Activated T-helper 1 cell treated with anti-CD3 and anti-CD28 coated beads, Interleukin-12 subunit alpha, Interleukin-12 subunit beta, Interleukin-2, Interleukin-4 antibody, amounts not matched to agents 30 ng/mL and 10 ng/mL and 1 ng/mL, durations not matched to agents 14 hours and 24 hours and 36 hours (primary cell): ENCODE measurements at regions of chr4 and their contacts with region 1.

Region 1: GRCh38 chr4:139266583-139267257 is 13.3 kb downstream of the MGARP start:
- DNase-seq: peak; percentile 70
- H3K4me3 Mint-ChIP-seq: peak overlapping the region; percentile 50
- H3K27ac Mint-ChIP-seq: peak overlapping the region; percentile 10
- H3K4me1 Mint-ChIP-seq: peaks cover 21% of the 10 kb centered on the region
- H3K27me3 Mint-ChIP-seq: peaks cover 23% of the 10 kb centered on the region

Region 2: GRCh38 chr4:138242076-138242833 is 1024.5 kb before region 1 on chr4 and contains the start of gene SLC7A11:
- intact Hi-C with region 1: loop called (anchors 10 kb)
- DNase-seq: peak; percentile 70
- H3K4me3 Mint-ChIP-seq: peak within 1 kb of the TSS; percentile 88
- H3K27ac Mint-ChIP-seq: peak within 1 kb of the TSS; percentile 83
- H3K4me1 Mint-ChIP-seq: peaks cover 32% of the 10 kb centered on the region
- H3K27me3 Mint-ChIP-seq: peaks cover 4% of the 10 kb centered on the region
- total RNA-seq, gene SLC7A11: 2.6 and 2.7 TPM in 2 replicates

Region 3: GRCh38 chr4:139279760-139280620 is 13.3 kb after region 1 on chr4 and contains the start of gene MGARP:
- intact Hi-C with region 1: loop called (anchors 1 kb)
- DNase-seq: no peak
- H3K4me3 Mint-ChIP-seq: peak within 1 kb of the TSS; percentile 65
- H3K27ac Mint-ChIP-seq: no peak within 1 kb of the TSS
- H3K4me1 Mint-ChIP-seq: peaks cover 13% of the 10 kb centered on the region
- H3K27me3 Mint-ChIP-seq: peaks cover 73% of the 10 kb centered on the region
- total RNA-seq, gene MGARP: 0.15 TPM in 1 of 2 replicates, not detected in the other

Region 4: DNA sequence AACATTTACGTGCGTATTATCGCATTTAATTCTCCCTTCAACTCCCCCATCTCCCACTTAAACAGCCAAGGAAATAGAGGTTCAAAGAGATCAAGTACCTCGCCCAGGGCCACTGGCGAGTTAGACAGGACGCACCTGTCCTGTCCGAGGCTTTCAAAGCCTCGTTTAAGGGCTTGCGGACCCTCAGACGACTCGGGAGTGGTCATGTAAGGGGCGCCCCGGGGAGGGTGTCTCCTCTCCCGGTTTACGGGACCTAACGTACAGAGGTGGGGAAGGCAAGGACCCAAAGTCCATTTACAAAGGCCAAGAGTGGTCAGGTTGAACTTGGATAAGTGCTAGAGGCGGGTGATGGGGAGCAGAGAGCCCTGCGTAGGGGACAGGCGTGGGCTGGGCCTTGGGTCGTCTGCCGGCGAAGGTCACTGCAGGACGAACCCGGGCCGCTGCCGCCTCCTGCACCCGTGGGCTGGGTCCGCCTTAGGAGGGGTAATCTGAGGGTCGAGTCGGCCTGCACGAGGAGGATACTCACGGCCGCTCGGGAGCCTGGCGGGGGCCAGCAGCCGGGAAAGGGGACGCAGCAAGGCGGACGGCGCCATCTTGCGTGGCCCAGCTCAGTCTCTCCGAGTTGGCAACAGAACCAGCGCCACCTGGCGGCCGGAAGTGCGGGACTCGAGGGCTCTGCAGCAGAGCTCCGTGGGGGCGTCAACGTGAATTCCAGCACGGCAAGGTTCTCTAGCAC is 28.7 kb after region 1 on chr4:
- intact Hi-C with region 1: loop called (anchors 1 kb)
- DNase-seq: peak; percentile 92
- H3K4me3 Mint-ChIP-seq: peak overlapping the region; percentile 93
- H3K27ac Mint-ChIP-seq: peak overlapping the region; percentile 94
- H3K4me1 Mint-ChIP-seq: peaks cover 39% of the 10 kb centered on the region
- H3K27me3 Mint-ChIP-seq: no peaks in the 10 kb centered on the region